Activated T-helper 2 cell treated with anti-CD3 and anti-CD28 coated beads, Interferon-gamma antibody, Interleukin-2, Interleukin-4, amounts not matched to agents 10 μg/mL and 5 μg/mL and 100 μg/mL, durations not matched to agents 14 hours and 24 hours and 36 hours (primary cell): ENCODE measurements at regions of chr3 and their contacts with region 1.

Region 1: DNA sequence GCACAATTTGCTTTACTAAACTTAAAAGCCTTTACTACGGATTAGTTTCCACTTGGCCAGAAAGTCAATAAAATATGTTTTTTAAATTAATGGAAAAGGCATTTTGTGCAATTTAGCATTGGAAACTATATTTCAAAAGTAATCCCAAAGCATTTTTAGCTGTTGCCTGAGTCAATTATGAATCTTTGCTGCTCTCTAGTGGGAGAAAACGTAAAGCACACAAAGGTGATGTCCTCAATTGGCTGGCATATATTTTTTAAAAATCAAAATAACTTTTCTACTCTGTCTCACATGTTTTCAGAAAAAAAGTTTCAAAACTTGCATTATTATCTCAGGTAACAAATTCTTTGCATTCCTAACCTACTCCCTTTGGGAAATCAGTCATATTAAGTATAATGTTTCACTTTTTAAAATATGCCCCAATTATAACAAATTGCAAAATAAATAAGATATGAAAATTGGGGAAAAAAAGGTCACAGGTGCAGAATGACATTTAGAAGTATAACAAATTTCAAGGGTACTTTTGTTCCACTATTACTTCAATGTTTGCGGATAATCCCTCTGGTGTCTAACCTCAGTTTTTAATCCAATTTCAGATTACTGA is 47.2 kb upstream of the TEX55 start:
- DNase-seq: no peak
- H3K4me3 Mint-ChIP-seq: no peak overlapping the region
- H3K27ac Mint-ChIP-seq: no peak overlapping the region
- H3K4me1 Mint-ChIP-seq: no peaks in the 10 kb centered on the region
- H3K27me3 Mint-ChIP-seq: peaks cover 4% of the 10 kb centered on the region

Region 2: DNA sequence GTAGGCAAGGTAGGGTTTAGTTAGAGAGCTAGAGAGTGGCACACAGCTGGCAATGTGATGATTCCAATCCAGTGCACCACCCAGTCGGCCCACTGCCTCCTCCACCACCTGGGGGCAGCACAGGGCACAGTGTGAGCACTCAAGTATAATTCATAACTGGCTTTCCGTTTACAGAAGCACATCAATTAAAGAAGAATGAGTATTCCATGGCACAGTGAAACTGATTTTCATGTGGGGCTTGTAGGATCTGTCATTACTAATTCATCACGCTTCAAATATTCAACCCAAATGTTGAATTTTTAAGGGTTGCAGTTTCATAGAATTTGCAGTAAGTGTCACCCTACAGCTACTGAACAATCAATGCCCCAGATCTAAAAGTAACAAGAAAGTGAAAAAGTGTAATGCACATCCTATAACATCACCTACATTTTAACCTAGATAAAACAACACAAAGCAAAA is 213.9 kb before region 1 on chr3:
- intact Hi-C with region 1: loop called (anchors 1 kb)
- DNase-seq: peak; percentile 52
- H3K4me3 Mint-ChIP-seq: no peak overlapping the region
- H3K27ac Mint-ChIP-seq: no peak overlapping the region
- H3K4me1 Mint-ChIP-seq: no peaks in the 10 kb centered on the region
- H3K27me3 Mint-ChIP-seq: peaks cover 16% of the 10 kb centered on the region

Region 3: GRCh38 chr3:119034256-119035013 is 64.3 kb before region 1 on chr3 and contains the start of gene IGSF11:
- intact Hi-C with region 1: loop called (anchors 5 kb)
- DNase-seq: peak; percentile 39
- H3K4me3 Mint-ChIP-seq: peak within 1 kb of the TSS; percentile 72
- H3K27ac Mint-ChIP-seq: no peak within 1 kb of the TSS
- H3K4me1 Mint-ChIP-seq: peaks cover 4% of the 10 kb centered on the region
- H3K27me3 Mint-ChIP-seq: peaks cover 59% of the 10 kb centered on the region
- total RNA-seq, gene IGSF11: 0.21 TPM in 1 of 2 replicates, not detected in the other

Region 4: DNA sequence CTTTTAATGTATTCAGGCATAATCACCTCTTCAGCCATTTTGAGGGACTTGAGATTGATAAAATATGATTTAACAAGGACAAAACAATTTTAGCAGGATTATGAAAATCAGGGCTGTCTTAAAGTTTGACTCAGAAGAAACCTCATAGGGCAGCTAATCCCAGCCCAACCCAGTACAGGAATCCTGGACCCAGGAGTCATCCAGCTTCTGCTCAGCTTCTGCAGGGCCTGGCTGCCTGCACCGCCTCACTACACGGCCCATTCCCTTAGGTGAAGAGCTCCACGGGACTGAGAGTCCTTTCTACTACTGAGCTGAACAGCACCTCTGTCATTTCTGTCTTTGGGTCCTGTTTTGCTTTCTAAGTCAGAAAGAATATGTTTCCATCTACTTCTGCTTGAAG is 232.9 kb after region 1 on chr3:
- intact Hi-C with region 1: no loop called
- DNase-seq: no peak
- H3K4me3 Mint-ChIP-seq: no peak overlapping the region
- H3K27ac Mint-ChIP-seq: no peak overlapping the region
- H3K4me1 Mint-ChIP-seq: peaks cover 13% of the 10 kb centered on the region
- H3K27me3 Mint-ChIP-seq: peaks cover 2% of the 10 kb centered on the region